Gastrocnemius medialis (tissue), 4 donors: ENCODE measurements at regions of chr5 and their contacts with region 1.

Region 1: GRCh38 chr5:14760548-14761017 is 96.1 kb downstream of the OTULIN start:
- DNase-seq: peak; percentile 78 to 90
- ATAC-seq: peak; percentile 95
- H3K4me3 ChIP-seq: no peak overlapping the region
- H3K27ac ChIP-seq: peak overlapping the region; percentile 80 to 89 (median 87)
- H3K4me1 ChIP-seq: peaks cover 48 to 53% of the 10 kb centered on the region in 2 donors
- H3K27me3 ChIP-seq: no peaks in the 10 kb centered on the region
- CTCF ChIP-seq: no peak
- POLR2A ChIP-seq: no peak

Region 2: GRCh38 chr5:14821100-14821845 is 60.7 kb after region 1 on chr5:
- in situ Hi-C with region 1: no loop called
- intact Hi-C with region 1: loop called (anchors 5 kb)
- DNase-seq: no peak
- ATAC-seq: no peak
- H3K4me3 ChIP-seq: no peak overlapping the region
- H3K27ac ChIP-seq: peak overlapping the region; percentile 73 to 88 (median 84)
- H3K4me1 ChIP-seq: peaks cover 63 to 70% of the 10 kb centered on the region in 2 donors
- H3K27me3 ChIP-seq: no peaks in the 10 kb centered on the region
- CTCF ChIP-seq: no peak
- POLR2A ChIP-seq: no peak